Psoas muscle (tissue), 8 donors: ENCODE measurements at regions of chr14 and their contacts with region 1.

Region 1: GRCh38 chr14:22386924-22387775 is 201.9 kb downstream of the DAD1 start:
- DNase-seq: peak in 1 of 2 donors; percentile 38
- ATAC-seq: peak in 3 of 4 donors; percentile 55 to 71 (median 65)
- H3K4me3 ChIP-seq: no peak overlapping the region
- H3K27ac ChIP-seq: no peak overlapping the region
- H3K4me1 ChIP-seq: no peaks in the 10 kb centered on the region
- H3K27me3 ChIP-seq: peaks cover 0 to 13% (median 0%) of the 10 kb centered on the region in 3 donors
- CTCF ChIP-seq: peak; percentile 85

Region 2: DNA sequence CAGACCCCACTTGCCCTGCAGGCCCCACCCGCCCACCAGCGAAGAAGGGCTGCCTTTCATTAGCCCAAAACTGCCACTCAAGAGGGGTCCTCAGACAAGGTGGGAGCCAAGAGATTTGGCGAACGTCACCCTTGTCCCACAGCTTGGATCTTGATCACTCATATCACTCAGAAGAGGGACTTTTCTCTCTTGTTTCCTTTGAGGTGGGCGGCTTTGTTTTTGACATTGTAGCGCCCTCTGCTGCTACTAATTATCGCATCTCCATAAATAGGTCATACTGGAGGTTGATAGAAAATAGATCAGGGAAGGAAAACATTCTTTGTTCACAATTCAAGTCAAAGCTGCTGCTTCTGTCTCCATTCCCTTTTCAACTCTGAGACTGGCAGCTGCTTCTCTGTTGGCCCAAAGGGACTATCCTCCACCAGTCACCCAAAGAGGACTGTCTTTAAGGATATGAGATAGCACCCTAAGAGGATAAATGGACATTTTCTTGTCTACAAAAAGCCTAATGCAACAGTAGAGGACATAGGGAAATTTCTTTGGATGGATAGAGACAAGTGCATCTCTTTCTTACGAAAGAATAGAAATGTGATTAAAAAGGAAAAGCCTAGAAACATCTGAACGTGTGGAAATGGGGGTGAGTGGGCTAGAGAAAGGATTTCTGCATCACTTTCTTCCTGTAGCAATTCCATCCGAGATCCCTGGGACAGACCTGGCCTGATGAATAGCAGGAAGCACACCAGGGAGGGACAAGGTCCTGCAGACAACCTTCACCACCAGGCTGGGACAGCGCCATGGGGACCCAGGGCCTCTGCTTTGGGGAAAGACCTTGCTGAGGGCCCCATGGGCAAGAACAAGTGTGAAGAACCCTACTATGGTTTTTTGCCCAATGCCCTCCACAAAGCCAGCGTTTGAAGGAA is 86.0 kb after region 1 on chr14:
- intact Hi-C with region 1: loop called (anchors 2 to 5 kb)
- DNase-seq: no peak
- ATAC-seq: no peak
- H3K4me3 ChIP-seq: no peak overlapping the region
- H3K27ac ChIP-seq: no peak overlapping the region
- H3K4me1 ChIP-seq: no peaks in the 10 kb centered on the region
- H3K27me3 ChIP-seq: peaks cover 0 to 2% (median 0%) of the 10 kb centered on the region in 3 donors
- CTCF ChIP-seq: peak; percentile 46

Region 3: DNA sequence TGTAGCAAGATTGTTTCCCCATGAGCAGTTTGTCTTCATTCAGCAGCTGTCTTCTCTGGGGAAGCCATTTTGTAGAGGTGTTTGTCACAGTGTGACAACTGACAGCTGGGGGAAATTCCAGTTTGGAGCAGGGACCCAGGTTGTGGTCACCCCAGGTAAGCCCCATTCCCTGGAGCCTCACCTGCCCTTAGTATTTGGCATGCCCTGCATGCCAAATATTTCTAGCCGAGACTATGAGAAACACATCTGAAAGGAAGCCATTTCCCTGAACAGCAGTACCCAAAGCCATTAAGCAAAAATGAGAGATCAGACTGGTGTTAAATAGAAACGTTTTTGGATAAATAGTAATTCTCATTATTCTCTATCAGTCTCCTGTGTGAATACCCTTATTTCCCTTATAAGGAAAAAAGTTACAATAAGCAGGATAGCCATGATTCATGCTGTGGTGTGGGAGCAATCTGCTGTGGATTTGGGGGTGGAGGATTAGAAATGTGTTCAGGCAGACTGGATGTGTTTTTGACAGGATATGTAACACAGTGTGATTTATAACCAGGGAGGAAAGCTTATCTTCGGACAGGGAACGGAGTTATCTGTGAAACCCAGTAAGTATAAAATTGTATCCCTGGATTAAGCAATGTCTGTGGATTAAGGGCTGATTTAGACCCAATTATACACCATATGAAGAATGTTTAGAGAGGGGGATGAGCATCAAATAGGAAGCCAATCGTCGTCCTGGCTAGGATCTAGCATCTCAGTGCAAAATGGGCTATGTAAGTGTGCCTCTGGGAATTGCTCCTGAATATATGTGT is 132.9 kb after region 1 on chr14:
- intact Hi-C with region 1: no loop called
- DNase-seq: no peak
- ATAC-seq: no peak
- H3K4me3 ChIP-seq: no peak overlapping the region
- H3K27ac ChIP-seq: no peak overlapping the region
- H3K4me1 ChIP-seq: peaks cover 2% of the 10 kb centered on the region
- H3K27me3 ChIP-seq: peaks cover 0 to 4% (median 0%) of the 10 kb centered on the region in 3 donors
- CTCF ChIP-seq: no peak

Region 4: DNA sequence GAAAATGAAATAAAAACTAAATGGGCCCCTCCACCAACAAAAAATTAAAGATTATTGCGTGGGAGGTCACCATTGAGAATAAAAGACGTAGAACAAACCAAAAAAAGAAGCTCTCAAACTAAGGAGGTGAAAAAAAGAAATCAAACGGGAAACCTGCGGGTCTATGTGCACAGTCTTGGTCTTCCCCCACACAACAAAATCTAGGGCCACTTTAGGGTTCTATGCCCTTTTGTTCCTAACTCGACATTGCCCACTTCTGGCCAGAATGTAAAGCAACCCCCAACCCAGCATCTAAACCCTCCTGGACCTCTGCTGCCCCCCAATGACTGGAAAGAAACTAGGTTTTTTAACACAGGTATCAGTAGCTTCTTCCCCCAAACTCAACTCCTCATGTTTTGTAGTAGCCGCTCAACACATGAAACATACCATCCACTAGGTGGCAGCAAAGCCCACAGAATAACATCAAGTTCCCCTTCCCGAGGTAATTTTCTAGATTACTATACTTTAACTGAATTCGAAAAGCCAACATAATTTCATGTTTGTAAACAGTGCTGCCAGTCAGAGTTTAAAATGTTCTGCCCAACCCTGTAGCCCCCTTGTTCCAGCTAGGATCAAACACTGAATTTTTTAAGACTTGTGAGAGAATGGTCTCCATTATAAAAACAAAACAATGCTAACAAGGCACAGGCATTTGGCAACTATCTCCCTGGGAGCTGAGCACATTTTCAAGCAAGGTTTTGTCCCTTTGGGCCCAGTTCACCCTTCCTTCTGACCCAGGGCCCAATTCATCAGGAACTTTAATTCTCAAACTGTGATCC is 183.2 kb after region 1 on chr14:
- intact Hi-C with region 1: no loop called
- DNase-seq: no peak
- ATAC-seq: peak; percentile 61 to 82 (median 71)
- H3K4me3 ChIP-seq: no peak overlapping the region
- H3K27ac ChIP-seq: peak overlapping the region; percentile 5
- H3K4me1 ChIP-seq: peaks cover 34% of the 10 kb centered on the region
- H3K27me3 ChIP-seq: no peaks in the 10 kb centered on the region
- CTCF ChIP-seq: peak; percentile 87

Region 5: DNA sequence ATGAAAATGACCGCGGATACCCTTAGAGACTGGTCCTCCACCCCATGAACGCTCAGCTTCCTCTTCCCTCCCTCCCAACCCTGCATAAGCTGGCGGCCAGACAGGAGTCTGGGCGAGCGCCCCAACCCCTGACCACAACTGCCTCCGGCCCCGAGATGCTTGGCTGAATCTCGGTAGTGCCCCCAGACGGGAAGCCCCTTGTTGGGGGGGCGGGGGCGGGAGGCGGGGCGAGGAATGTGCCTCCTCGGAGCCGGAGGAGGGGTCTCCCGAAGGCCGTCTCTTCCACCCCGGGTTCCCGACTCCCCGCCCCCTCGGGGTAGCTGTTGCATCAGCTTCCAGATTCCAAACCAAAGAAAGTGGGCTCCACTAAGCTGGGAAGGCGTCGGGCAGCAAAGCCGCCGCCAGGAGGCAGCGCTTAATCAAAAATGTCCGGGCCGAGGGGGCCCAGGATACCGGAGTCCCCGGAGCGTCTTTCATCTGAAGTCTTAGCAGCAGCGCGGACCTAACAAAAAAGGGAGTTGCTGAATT is 435.5 kb after region 1 on chr14:
- intact Hi-C with region 1: loop called in 1 of 2 experiments (anchors 10 kb)
- DNase-seq: peak; percentile 81 to 85
- ATAC-seq: peak; percentile 83 to 95 (median 86)
- H3K4me3 ChIP-seq: peak overlapping the region; percentile 41
- H3K27ac ChIP-seq: no peak overlapping the region
- H3K4me1 ChIP-seq: no peaks in the 10 kb centered on the region
- H3K27me3 ChIP-seq: peaks cover 0 to 2% (median 0%) of the 10 kb centered on the region in 3 donors
- CTCF ChIP-seq: peak; percentile 83

Region 6: DNA sequence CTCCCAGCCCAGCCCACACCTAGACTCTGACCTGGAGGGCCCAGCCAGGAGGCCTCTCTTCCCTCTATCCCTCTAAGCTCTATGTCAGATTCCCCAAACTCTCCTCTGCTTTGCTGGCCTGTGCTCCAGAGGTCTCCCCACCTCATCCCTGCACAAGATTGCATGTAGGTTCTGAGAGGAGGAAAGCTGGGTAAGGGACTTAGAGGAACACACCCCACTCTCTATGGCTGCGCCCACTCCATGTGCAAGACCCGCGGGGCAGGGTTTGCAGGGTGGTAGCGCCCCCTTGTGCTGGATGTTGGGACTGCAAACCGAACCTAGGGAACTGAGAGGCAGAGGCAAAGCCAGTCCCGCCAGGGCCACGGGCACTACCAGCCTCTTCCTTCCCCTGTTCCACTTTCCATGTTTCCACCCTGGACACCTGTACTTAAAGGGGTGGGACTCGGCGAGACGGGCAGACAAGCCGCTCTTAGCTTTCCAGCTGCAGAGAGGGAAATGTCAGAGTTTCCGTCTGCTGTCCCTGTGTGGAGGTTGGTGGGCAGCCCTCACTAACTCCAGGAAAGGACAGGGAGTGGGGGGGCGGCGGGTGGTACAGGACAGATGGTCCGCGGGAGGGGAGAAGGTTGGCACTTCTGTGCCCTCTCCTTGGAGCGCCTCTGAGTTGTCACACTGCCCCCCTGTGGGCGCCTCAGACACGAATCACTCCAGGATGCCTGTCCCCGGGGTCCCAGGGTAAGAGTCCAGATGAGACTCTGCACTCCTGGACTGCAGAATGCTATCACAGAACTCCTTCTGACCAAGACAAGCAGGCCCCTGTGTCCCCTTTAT is 466.0 kb after region 1 on chr14:
- intact Hi-C with region 1: loop called in 1 of 2 experiments (anchors 2 kb)
- DNase-seq: peak; percentile 88 to 93
- ATAC-seq: peak; percentile 70 to 81 (median 73)
- H3K4me3 ChIP-seq: peak overlapping the region; percentile 68
- H3K27ac ChIP-seq: no peak overlapping the region
- H3K4me1 ChIP-seq: peaks cover 47% of the 10 kb centered on the region
- H3K27me3 ChIP-seq: no peaks in the 10 kb centered on the region
- CTCF ChIP-seq: peak; percentile 89